ENCODE measurements at regions of chr3 and their contacts with region 1.

Region 1: DNA sequence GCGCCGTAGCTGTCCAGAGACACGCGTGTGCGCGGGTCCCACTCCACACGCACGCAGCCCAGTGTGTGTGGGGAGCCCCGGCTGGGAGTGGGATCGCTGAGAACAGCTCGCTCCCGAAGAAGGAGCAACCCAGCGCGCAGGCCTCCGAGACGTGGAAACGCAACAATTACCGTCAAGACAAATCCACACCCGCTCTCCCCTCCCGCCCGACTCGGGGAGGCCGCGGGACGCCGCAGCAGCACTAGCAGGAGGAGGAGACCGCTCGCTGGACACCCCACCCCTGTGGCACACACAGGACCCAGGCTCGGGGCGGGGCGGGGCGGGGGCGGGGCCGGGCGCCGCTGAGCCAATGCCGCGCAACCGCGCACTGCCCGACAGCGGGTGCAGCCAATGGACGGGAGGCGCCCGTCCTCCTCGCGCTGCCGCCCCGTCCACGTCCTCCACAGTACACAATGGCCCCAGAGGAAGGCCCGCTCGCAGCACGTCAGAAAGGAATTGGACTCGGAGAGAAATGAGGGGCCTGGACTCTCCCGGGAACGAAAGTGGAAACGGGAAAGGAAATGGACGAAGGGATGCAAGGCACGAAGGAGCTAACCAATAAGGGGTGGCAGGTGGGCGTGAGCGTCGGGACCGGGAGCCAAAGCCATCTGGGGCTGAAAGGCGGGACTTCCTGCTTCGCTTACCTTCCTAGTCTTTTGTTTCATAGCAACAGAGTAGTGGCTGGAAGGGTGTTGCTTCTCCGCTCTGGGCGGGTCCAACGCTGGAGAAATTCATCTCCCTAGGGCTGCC is at the start of gene CBLB:
- DNase-seq: peak; percentile 92 to 94
- ATAC-seq: peak; percentile 93 to 98 (median 94)
- H3K4me3 ChIP-seq: peak within 1 kb of the TSS; percentile 67 to 95 (median 92)
- H3K27ac ChIP-seq: peak within 1 kb of the TSS; percentile 95 to 99 (median 98)
- H3K4me1 ChIP-seq: peaks cover 0 to 50% (median 40%) of the 10 kb centered on the region in 9 donors
- H3K27me3 ChIP-seq: no peaks in the 10 kb centered on the region
- CTCF ChIP-seq: no peak
- total RNA-seq, gene CBLB: 31.2 to 72.7 (median 46.0) TPM

Region 2: DNA sequence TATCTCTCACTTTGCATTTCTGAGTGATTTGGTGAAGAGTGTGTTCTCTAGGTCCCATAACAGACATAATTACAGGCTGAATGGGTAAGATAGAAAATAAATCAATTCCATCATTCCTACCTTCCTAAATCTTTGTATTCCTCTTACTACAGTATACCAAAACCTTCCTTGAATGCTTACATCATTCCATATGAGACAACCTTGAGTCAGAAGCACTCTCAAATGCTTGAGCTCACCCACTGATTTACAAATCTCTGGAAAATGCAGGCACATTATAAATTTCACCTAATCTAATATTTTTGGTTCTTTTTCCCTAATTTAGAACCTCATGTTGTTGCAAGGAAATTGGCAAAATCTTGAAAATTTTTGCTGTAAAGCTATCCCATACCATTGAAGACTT is 239.2 kb before region 1 on chr3:
- intact Hi-C with region 1: no loop called
- DNase-seq: no peak
- ATAC-seq: no peak
- H3K4me3 ChIP-seq: no peak overlapping the region
- H3K27ac ChIP-seq: no peak overlapping the region
- H3K4me1 ChIP-seq: no peaks in the 10 kb centered on the region
- H3K27me3 ChIP-seq: no peaks in the 10 kb centered on the region
- CTCF ChIP-seq: no peak

Region 3: DNA sequence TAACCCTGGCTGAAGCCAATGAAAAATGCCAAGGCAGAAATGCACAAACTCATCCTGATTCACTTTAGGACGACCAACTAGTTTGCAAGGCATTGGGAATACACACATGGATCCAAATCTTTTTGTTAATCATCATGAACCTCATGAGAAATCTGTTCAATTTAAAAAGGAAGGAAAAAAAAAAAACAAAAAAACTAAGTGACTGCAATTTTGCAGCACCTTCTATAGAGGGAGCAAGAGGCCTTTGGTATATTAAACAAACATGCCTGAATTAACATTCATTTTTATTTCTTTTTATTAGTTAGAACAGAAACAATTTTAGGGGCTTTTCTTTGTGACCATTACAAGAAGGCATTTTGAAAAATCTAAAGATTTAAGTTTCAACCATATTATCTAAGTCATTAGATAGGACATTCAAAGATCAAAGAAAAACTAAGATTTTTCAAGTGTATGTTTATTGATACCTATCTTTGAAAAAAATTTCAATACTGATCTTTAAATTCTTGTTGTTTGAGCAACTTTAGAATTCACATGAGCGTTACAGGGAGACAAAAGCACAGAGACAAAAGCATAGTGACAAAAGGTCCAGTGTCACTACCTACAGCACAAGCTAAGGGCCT is 182.5 kb before region 1 on chr3:
- intact Hi-C with region 1: loop called in 7 of 10 experiments (anchors 5 to 10 kb)
- DNase-seq: no peak
- ATAC-seq: peak in 2 of 8 donors; percentile 42 to 49
- H3K4me3 ChIP-seq: no peak overlapping the region
- H3K27ac ChIP-seq: peak overlapping the region in 2 of 10 donors; percentile 10 to 28
- H3K4me1 ChIP-seq: peaks cover 0 to 36% (median 15%) of the 10 kb centered on the region in 9 donors
- H3K27me3 ChIP-seq: no peaks in the 10 kb centered on the region
- CTCF ChIP-seq: peak; percentile 63 to 89 (median 79)

Region 4: DNA sequence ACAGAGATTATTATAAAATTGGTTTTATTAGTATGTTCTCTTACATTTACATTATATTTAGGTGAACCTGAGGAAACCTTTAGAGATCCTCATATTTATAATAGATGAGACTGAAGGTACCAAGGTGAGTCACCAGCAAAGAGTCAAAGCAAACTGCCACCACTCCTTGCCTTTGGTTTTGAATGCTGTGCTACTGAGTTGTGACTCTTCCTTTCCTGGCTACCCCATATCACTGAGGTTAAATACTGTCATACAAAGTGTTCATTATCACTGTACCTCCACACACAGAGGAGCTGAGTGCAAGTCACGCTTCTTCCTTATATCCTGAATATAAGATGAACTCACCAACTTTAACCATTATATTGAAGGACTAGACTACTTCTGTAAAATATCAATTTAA is 168.4 kb before region 1 on chr3:
- intact Hi-C with region 1: loop called in 4 of 10 experiments (anchors 10 kb)
- DNase-seq: no peak
- ATAC-seq: peak in 1 of 8 donors; percentile 25
- H3K4me3 ChIP-seq: no peak overlapping the region
- H3K27ac ChIP-seq: no peak overlapping the region
- H3K4me1 ChIP-seq: peaks cover 0 to 5% (median 0%) of the 10 kb centered on the region in 9 donors
- H3K27me3 ChIP-seq: no peaks in the 10 kb centered on the region
- CTCF ChIP-seq: no peak

Region 5: GRCh38 chr3:105722943-105723556 is 145.9 kb before region 1 on chr3:
- intact Hi-C with region 1: loop called in 3 of 10 experiments (anchors 10 kb)
- DNase-seq: no peak
- ATAC-seq: peak in 4 of 8 donors; percentile 51 to 76 (median 56)
- H3K4me3 ChIP-seq: no peak overlapping the region
- H3K27ac ChIP-seq: peak overlapping the region in 1 of 10 donors; percentile 48
- H3K4me1 ChIP-seq: peaks cover 0 to 19% (median 0%) of the 10 kb centered on the region in 9 donors
- H3K27me3 ChIP-seq: no peaks in the 10 kb centered on the region
- CTCF ChIP-seq: no peak

Region 6: GRCh38 chr3:105827959-105828358 is 41.0 kb before region 1 on chr3:
- intact Hi-C with region 1: loop called in 1 of 10 experiments (anchors 5 kb)
- DNase-seq: peak in 1 of 2 donors; percentile 28
- ATAC-seq: peak; percentile 55 to 76 (median 64)
- H3K4me3 ChIP-seq: no peak overlapping the region
- H3K27ac ChIP-seq: peak overlapping the region in 8 of 10 donors; percentile 13 to 78 (median 28)
- H3K4me1 ChIP-seq: peaks cover 0 to 95% (median 70%) of the 10 kb centered on the region in 9 donors
- H3K27me3 ChIP-seq: no peaks in the 10 kb centered on the region
- CTCF ChIP-seq: peak in 5 of 9 donors; percentile 18 to 49 (median 28)

Region 7: GRCh38 chr3:106058475-106058874 is 189.5 kb after region 1 on chr3:
- intact Hi-C with region 1: no loop called
- DNase-seq: no peak
- ATAC-seq: peak in 7 of 8 donors; percentile 63 to 92 (median 85)
- H3K4me3 ChIP-seq: no peak overlapping the region
- H3K27ac ChIP-seq: peak overlapping the region in 5 of 10 donors; percentile 18 to 46 (median 37)
- H3K4me1 ChIP-seq: peaks cover 0 to 22% (median 5%) of the 10 kb centered on the region in 9 donors
- H3K27me3 ChIP-seq: no peaks in the 10 kb centered on the region
- CTCF ChIP-seq: no peak

Region 8: GRCh38 chr3:106206146-106206545 is 337.2 kb after region 1 on chr3:
- intact Hi-C with region 1: loop called in 4 of 10 experiments (anchors 2 to 5 kb)
- DNase-seq: peak in 1 of 2 donors; percentile 15
- ATAC-seq: peak in 7 of 8 donors; percentile 70 to 94 (median 87)
- H3K4me3 ChIP-seq: peak overlapping the region in 3 of 10 donors; percentile 12 to 22 (median 12)
- H3K27ac ChIP-seq: peak overlapping the region in 7 of 10 donors; percentile 4 to 80 (median 57)
- H3K4me1 ChIP-seq: peaks cover 0 to 27% (median 12%) of the 10 kb centered on the region in 9 donors
- H3K27me3 ChIP-seq: no peaks in the 10 kb centered on the region
- CTCF ChIP-seq: no peak